ENCODE measurements at regions of chr15 and their contacts with region 1.

Region 1: DNA sequence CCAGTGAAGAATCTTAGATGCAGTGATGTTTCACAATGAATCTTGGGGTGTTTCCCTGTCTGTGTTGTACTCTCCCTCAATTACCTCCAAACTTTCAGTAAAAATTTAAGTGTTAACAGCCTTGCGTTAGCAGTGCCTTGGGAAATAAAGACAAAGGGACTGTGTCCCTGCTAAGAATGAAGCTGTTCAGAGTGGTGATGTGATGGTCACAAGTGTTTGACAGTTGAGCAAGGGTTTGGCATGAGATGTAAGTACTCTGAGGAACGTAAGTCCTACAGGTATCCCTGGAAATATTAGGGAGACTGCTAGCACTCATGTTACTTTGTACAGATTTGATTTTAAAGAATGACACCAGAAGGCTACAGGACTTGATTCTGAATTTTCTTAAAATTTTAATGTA is 304.3 kb upstream of the DPH6 start:
- DNase-seq: no peak
- H3K4me3 ChIP-seq: no peak overlapping the region
- H3K27ac ChIP-seq: no peak overlapping the region
- H3K4me1 ChIP-seq: no peaks in the 10 kb centered on the region
- H3K27me3 ChIP-seq: no peaks in the 10 kb centered on the region
- CTCF ChIP-seq: no peak
- POLR2A ChIP-seq: no peak

Region 2: DNA sequence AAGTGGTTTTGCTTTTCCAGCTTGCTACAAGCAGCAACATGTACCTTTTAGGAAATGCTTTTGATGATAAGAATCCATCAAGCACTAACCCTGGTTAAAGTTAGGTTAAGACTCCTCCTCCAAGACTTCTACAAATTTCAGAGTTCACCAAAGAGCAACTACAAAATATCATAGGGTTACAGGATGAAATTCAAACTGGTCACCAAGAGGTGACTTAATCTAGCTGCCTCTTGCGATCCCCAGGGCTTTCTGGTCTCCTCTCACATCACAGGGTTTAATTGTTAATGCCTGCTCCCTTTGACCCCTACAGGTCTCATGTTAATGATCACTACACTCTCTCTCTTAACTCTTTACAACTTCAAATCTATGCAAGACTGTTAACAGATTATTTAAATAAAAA is 370.9 kb before region 1 on chr15:
- intact Hi-C with region 1: no loop called
- DNase-seq: no peak
- H3K4me3 ChIP-seq: no peak overlapping the region
- H3K27ac ChIP-seq: no peak overlapping the region
- H3K4me1 ChIP-seq: no peaks in the 10 kb centered on the region
- H3K27me3 ChIP-seq: no peaks in the 10 kb centered on the region
- CTCF ChIP-seq: no peak
- POLR2A ChIP-seq: no peak

Region 3: DNA sequence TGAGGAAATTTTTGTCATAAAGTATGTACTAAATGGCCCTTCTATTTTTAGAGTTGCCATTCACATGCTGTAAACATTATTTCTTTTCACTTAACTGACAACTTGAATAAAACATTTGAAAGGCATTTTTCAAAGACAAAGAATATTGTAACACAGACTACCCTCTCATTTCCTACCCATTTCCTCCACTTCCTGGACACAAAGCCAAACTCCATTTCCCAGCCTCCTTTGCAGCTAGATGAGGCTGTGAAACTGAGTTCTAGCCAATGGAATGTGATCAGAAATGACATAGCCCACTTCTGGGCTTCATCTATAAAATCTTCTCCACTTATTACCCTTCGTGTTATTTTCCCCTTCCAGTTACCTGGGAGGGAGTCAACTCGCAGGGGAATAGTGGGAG is 15.4 kb before region 1 on chr15:
- intact Hi-C with region 1: loop called (anchors 1 kb)
- DNase-seq: no peak
- H3K4me3 ChIP-seq: no peak overlapping the region
- H3K27ac ChIP-seq: no peak overlapping the region
- H3K4me1 ChIP-seq: no peaks in the 10 kb centered on the region
- H3K27me3 ChIP-seq: no peaks in the 10 kb centered on the region
- CTCF ChIP-seq: no peak
- POLR2A ChIP-seq: no peak

Region 4: DNA sequence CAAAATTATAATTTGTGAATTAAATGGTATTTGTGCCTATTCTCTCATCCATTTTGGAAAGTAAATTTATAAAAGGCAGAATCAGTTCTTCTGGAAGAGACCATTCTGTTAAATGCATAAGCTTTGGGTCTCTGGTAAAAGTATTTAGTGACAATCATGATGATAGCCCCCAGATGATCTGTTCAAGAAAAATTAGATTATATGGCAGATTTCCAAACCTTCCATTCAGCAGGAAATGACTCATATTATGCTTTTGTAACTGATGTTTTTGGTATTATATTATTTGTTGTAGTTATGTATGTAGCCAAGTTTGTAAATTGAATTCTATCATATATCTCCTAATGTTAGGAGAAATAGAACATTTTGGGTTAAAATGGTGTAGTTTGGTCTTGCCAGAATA is 36.5 kb after region 1 on chr15:
- intact Hi-C with region 1: no loop called
- DNase-seq: no peak
- H3K4me3 ChIP-seq: no peak overlapping the region
- H3K27ac ChIP-seq: no peak overlapping the region
- H3K4me1 ChIP-seq: no peaks in the 10 kb centered on the region
- H3K27me3 ChIP-seq: no peaks in the 10 kb centered on the region
- CTCF ChIP-seq: no peak
- POLR2A ChIP-seq: no peak

Measured in breast epithelium (tissue), 4 donors.